MCF 10A (cell line): ENCODE measurements at regions of chr2 and their contacts with region 1.

Region 1: DNA sequence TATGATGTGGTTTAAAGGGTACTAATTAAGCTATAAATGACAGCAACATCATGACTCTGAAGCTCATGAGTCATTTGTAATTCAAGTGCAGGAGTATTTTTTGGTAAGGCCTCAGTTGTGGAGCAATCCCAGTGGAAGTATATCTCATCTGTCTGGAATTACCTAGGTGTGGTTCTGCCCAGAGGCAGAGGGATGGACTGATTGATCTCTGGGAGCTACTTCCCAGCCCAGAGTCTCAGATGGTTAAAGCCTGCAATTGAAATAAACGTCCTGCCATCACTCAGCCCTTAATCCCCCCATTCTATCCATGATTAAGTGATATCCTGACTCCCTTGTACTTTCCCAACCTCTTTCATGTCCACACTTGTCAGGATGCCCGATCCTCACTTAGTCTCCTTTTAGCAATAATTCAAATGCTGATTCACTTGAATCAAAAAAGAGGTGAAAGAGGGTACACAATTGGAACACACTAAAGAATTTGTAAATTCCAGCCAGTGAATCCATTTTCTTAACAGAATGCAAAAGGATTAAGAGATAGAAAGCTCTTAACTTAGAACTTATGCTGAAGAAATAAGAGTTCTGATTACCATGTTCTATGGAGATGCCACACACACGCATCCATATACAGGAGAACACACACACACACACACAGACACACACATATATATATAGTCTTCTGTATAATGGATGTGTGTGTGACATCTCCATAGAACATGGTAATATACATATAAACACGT is 664.4 kb downstream of the NYAP2 start:
- DNase-seq: peak; percentile 78
- H3K4me3 Mint-ChIP-seq: no peak overlapping the region
- H3K27ac Mint-ChIP-seq: peak overlapping the region; percentile 63
- H3K4me1 Mint-ChIP-seq: peaks cover 27% of the 10 kb centered on the region
- H3K27me3 Mint-ChIP-seq: no peaks in the 10 kb centered on the region
- CTCF ChIP-seq: no peak

Region 2: DNA sequence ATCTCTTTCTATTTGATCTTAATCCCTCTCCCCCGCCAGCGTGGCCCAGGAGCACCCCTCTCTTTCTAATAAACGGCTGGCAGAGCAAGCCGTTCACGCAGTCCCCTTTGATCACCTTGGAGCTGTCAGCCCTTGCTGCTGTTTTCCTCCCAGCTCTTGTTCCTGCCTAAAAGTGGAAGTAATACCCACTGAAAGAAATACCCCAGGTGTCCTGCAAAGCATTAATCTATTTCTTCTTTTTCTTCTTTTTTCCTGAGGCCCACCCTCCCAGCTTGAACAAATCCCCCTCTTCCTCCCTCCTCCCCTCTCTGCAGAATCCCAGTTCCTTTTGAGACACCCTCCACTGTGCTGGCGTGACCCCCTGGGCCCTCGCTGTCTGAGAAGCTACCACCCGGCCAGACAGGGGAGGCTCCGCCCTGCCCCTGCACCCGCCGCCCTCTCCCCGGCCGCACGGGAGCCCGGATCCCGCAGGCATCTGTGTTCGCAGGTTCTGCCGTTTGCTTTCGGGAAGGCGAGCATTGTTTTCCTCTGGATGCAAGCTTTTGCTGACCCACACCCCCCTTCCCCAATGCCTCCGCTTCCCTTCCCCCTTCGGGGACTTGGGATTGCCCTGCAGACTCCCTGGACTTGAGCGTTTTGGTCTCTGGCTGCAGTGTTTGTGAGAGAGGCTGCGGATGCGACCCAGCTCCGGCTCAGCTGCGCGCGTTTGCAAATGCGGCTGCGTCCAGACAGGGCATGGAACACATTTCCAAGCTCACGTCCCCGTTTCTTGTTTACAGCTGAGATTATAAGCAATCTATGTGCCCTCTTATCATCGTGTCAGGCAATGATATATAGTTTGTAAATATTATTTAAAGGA is 32.9 kb before region 1 on chr2:
- CTCF ChIA-PET with region 1: interaction called, 4 read pairs
- POLR2A ChIA-PET with region 1: interaction called, 10 read pairs
- intact Hi-C with region 1: no loop called
- DNase-seq: peak; percentile 51
- H3K4me3 Mint-ChIP-seq: peak overlapping the region; percentile 74
- H3K27ac Mint-ChIP-seq: no peak overlapping the region
- H3K4me1 Mint-ChIP-seq: peaks cover 21% of the 10 kb centered on the region
- H3K27me3 Mint-ChIP-seq: no peaks in the 10 kb centered on the region
- CTCF ChIP-seq: no peak

Region 3: GRCh38 chr2:226077031-226077430 is 13.2 kb after region 1 on chr2:
- CTCF ChIA-PET with region 1: interaction called, 4 read pairs
- POLR2A ChIA-PET with region 1: interaction called, 11 read pairs
- intact Hi-C with region 1: no loop called
- DNase-seq: peak; percentile 21
- H3K4me3 Mint-ChIP-seq: no peak overlapping the region
- H3K27ac Mint-ChIP-seq: peak overlapping the region; percentile 8
- H3K4me1 Mint-ChIP-seq: peaks cover 10% of the 10 kb centered on the region
- H3K27me3 Mint-ChIP-seq: no peaks in the 10 kb centered on the region
- CTCF ChIP-seq: no peak